Activated naive CD8-positive, alpha-beta T cell treated with anti-CD3 and anti-CD28 coated beads, Interleukin-2, amount 10 ng/mL, durations not matched to agents 7 days and 5 days (primary cell): ENCODE measurements at regions of chr17 and their contacts with region 1.

Region 1: GRCh38 chr17:16438557-16439302 is 23.4 kb downstream of the TRPV2 start:
- DNase-seq: peak; percentile 91
- ATAC-seq: peak; percentile 91
- H3K4me3 Mint-ChIP-seq: peak overlapping the region; percentile 99
- H3K27ac Mint-ChIP-seq: peak overlapping the region; percentile 98
- H3K4me1 Mint-ChIP-seq: peaks cover 39% of the 10 kb centered on the region
- H3K27me3 Mint-ChIP-seq: no peaks in the 10 kb centered on the region

Region 2: DNA sequence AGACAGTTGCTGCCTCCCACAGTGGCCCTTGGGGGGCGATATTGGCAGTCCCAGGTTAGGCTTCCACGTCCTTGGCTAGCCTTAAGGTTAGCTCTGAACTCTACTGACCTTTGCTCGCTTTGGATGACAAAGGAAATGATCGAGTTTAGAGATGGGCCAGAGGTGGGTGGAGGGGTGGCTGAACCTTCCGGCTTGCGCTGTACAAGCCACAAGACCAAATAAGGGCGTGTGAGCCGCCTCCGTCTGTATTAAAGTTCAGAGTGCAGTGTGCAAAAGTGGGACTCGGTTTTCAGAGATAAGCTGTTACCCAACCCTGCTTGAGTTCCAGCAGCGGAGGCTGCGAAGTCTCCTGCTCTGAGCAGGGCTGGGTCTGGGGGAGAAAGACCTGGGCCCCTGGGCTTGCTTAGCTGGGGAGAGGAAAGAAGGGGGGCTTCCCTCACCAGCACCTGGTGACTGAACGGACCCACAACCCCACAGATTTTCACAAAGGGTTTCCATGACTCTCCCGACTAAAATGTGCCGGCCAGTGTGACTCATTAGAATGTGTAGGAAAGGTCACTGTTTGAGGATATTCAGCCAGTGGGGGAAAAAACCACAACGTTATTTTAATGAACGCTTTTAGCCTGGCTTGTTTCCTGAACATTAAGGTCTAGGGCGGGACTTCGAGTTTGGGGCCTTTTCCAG is 152.6 kb before region 1 on chr17:
- POLR2A ChIA-PET with region 1: no interaction called
- DNase-seq: peak; percentile 73
- ATAC-seq: peak; percentile 97
- H3K4me3 Mint-ChIP-seq: peak overlapping the region; percentile 65
- H3K27ac Mint-ChIP-seq: peak overlapping the region; percentile 95
- H3K4me1 Mint-ChIP-seq: peaks cover 44% of the 10 kb centered on the region
- H3K27me3 Mint-ChIP-seq: no peaks in the 10 kb centered on the region

Region 3: GRCh38 chr17:16380640-16381495 is 57.9 kb before region 1 on chr17 and contains the start of gene UBB:
- POLR2A ChIA-PET with region 1: interaction called, 36 read pairs
- DNase-seq: peak; percentile 89
- ATAC-seq: peak; percentile 96
- H3K4me3 Mint-ChIP-seq: peak within 1 kb of the TSS; percentile 96
- H3K27ac Mint-ChIP-seq: peak within 1 kb of the TSS; percentile 93
- H3K4me1 Mint-ChIP-seq: peaks cover 24% of the 10 kb centered on the region
- H3K27me3 Mint-ChIP-seq: no peaks in the 10 kb centered on the region
- total RNA-seq, gene UBB: 1,069 to 1,087 TPM

Region 4: DNA sequence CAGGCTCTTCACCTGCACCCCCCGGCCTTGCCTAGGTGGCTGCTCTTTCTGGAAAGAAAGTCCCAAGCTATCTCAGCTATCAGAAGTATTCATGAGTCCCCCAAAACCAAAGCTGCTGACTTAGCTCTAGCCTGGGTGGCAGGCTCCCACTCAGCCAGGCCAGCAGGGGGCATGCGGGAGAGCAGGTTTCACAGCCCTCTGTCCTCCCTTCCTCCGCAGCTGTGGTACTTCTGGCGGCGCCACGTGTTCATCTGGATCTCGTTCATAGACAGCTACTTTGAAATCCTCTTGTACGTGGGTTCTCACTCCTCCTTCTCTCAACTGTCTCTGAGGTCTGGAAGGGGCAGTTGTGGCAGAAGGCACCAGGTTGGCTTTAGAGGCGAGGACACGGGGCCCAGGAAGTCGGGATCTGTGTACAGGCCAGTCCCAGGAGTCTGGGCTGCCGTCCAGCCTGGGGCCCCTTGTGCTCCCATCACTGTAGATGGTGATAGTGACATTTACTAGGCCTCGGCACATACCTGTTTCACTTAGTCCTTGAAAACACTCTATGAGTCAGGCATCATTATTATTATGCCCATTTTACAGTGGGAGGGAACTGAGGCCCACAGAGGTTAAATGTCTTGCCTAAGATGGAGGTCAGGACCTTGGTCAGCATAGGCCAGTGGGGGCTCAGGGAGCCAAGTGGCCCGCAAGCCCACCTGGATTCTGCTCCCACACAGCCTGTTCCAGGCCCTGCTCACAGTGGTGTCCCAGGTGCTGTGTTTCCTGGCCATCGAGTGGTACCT is 10.4 kb before region 1 on chr17:
- POLR2A ChIA-PET with region 1: interaction called, 20 read pairs
- DNase-seq: peak; percentile 58
- ATAC-seq: peak; percentile 70
- H3K4me3 Mint-ChIP-seq: no peak overlapping the region
- H3K27ac Mint-ChIP-seq: no peak overlapping the region
- H3K4me1 Mint-ChIP-seq: peaks cover 4% of the 10 kb centered on the region
- H3K27me3 Mint-ChIP-seq: no peaks in the 10 kb centered on the region

Region 5: GRCh38 chr17:16491703-16492612 is 53.2 kb after region 1 on chr17 and contains the start of gene LRRC75A:
- POLR2A ChIA-PET with region 1: no interaction called
- DNase-seq: peak; percentile 77
- ATAC-seq: peak; percentile 85
- H3K4me3 Mint-ChIP-seq: peak within 1 kb of the TSS; percentile 70
- H3K27ac Mint-ChIP-seq: no peak within 1 kb of the TSS
- H3K4me1 Mint-ChIP-seq: peaks cover 7% of the 10 kb centered on the region
- H3K27me3 Mint-ChIP-seq: peaks cover 25% of the 10 kb centered on the region
- total RNA-seq, gene LRRC75A: 5.5 to 6.2 TPM